ENCODE measurements at regions of chr1 and their contacts with region 1.

Region 1: DNA sequence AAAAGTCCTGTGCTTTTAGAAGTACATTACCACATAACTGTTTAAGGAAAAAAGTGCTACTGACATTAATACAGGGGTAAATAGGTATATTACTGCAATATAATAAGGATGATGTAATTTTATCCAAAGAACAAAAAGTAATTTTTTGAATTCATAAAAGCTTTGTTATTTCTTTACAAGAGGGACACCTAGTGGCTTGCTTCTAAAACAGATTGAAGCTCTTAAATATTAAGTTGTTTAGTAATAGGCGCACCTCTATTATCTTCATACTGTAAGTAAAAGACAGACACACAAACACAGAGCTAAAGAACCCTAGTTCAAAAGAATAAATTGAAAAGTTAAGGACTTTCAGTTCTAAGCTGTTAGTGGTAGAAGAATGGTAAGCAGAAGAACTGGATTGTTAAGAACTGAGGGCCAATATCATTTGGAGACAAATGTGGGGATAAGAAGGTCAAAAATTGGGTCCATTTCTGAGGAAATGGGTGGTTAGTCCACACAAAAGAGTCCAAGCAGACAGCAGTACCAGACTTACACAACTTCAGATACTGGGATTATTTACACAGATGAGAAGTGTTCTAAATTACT is 15.4 kb downstream of the ZNHIT6 start:
- DNase-seq: no peak
- ATAC-seq: no peak
- H3K4me3 ChIP-seq: no peak overlapping the region
- H3K27ac ChIP-seq: no peak overlapping the region
- H3K4me1 ChIP-seq: no peaks in the 10 kb centered on the region
- H3K27me3 ChIP-seq: no peaks in the 10 kb centered on the region

Region 2: GRCh38 chr1:85584264-85584781 is 108.5 kb before region 1 on chr1:
- intact Hi-C with region 1: loop called (anchors 2 to 5 kb)
- DNase-seq: no peak
- ATAC-seq: no peak
- H3K4me3 ChIP-seq: peak overlapping the region; percentile 39 to 72
- H3K27ac ChIP-seq: peak overlapping the region; percentile 18 to 58
- H3K4me1 ChIP-seq: no peaks in the 10 kb centered on the region
- H3K27me3 ChIP-seq: no peaks in the 10 kb centered on the region